GM12878 (cell line): ENCODE measurements at regions of chr9 and their contacts with region 1.

Region 1: GRCh38 chr9:6575324-6576034 is 70.0 kb downstream of the GLDC start:
- DNase-seq: peak; percentile 53
- ATAC-seq: peak; percentile 95
- H3K4me3 ChIP-seq: no peak overlapping the region
- H3K27ac ChIP-seq: peak overlapping the region; percentile 4; the same call in 1 of the 2 replicates
- H3K4me1 ChIP-seq: peaks cover 18% of the 10 kb centered on the region
- H3K27me3 ChIP-seq: no peaks in the 10 kb centered on the region
- CTCF ChIP-seq: no peak
- EP300 ChIP-seq: no peak
- POLR2A ChIP-seq: no peak
- RAD21 ChIP-seq: no peak

Region 2: GRCh38 chr9:6640268-6641072 is 65.0 kb after region 1 on chr9:
- CTCF ChIA-PET with region 1: interaction called, 4 read pairs
- POLR2A ChIA-PET with region 1: interaction called, 4 read pairs
- RAD21 ChIA-PET with region 1: interaction called, 5 read pairs
- SMC1A ChIA-PET with region 1: interaction called, 19 read pairs
- in situ Hi-C with region 1: no loop called
- intact Hi-C with region 1: no loop called
- DNase-seq: no peak
- ATAC-seq: no peak
- H3K4me3 ChIP-seq: no peak overlapping the region
- H3K27ac ChIP-seq: no peak overlapping the region
- H3K4me1 ChIP-seq: peaks cover 7% of the 10 kb centered on the region; the same call in 1 of the 2 replicates
- H3K27me3 ChIP-seq: no peaks in the 10 kb centered on the region
- CTCF ChIP-seq: no peak
- EP300 ChIP-seq: no peak
- POLR2A ChIP-seq: no peak
- RAD21 ChIP-seq: no peak

Region 3: DNA sequence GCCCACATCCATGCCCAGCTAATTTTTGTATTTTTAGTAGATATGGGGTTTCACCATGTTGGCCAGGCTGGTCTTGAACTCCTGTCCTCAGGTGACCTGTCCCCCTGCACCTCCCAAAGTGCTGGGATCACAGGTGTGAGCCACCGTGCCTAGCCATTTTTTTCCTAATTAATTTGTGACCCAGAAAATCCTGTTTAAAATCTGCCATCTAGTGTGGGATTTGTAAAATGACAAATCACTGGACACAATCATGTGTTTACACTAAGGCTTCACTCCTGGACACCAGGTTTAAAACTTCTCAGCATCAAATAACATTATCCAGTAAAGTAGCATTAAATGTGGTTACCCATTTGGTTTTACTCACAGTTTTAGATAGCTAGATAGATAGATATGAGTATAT is 163.7 kb after region 1 on chr9:
- CTCF ChIA-PET with region 1: interaction called, 5 read pairs
- POLR2A ChIA-PET with region 1: no interaction called
- RAD21 ChIA-PET with region 1: interaction called, 4 read pairs
- SMC1A ChIA-PET with region 1: interaction called, 12 read pairs
- in situ Hi-C with region 1: no loop called
- intact Hi-C with region 1: no loop called
- DNase-seq: no peak
- ATAC-seq: peak; percentile 59
- H3K4me3 ChIP-seq: no peak overlapping the region
- H3K27ac ChIP-seq: no peak overlapping the region
- H3K4me1 ChIP-seq: no peaks in the 10 kb centered on the region
- H3K27me3 ChIP-seq: no peaks in the 10 kb centered on the region
- CTCF ChIP-seq: peak; percentile 8 to 46 (median 36); a peak in 4 of 6 replicates
- EP300 ChIP-seq: no peak
- POLR2A ChIP-seq: no peak
- RAD21 ChIP-seq: peak; percentile 57